Dorsolateral prefrontal cortex (tissue), 120 donors: ENCODE measurements at regions of chr3 and their contacts with region 1.

Region 1: DNA sequence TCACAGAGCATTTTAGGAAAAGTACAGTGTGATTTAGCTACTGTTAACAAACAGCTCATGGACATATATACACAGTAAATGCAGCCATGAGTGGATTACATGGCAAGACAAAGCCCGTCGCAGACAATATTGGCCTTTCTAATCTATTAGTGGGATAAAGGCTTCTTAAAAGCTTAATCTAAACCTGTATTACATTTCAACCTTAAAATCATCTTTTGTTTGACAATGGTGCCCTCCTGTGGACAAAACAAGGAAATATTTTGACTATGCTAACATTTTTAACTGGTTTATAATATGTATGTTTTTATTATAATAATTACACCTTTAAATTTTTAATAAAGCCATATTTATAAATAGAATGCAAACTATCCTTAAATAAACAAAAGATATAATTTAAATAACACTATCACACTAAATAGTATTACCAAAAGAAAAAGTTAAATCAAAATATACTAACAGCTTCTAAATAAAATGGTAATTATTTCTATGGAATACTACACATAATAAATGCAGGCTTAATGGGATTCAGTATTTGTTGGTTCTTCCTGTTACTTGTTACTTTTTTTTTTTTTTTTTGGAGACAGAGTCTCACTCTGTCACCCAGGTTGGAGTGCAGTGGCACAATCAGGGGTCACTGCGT is 38.6 kb downstream of the TAFA4 start:
- DNase-seq: no peak
- H3K4me3 ChIP-seq: no peak overlapping the region
- H3K27ac ChIP-seq: no peak overlapping the region
- H3K27me3 ChIP-seq: no peaks in the 10 kb centered on the region
- CTCF ChIP-seq: peak; percentile 36 to 82 (median 66)

Region 2: GRCh38 chr3:68953816-68954444 is 60.2 kb after region 1 on chr3:
- intact Hi-C with region 1: loop called in 1 of 2 experiments (anchors 2 kb)
- DNase-seq: no peak
- H3K4me3 ChIP-seq: no peak overlapping the region
- H3K27ac ChIP-seq: no peak overlapping the region
- H3K27me3 ChIP-seq: no peaks in the 10 kb centered on the region
- CTCF ChIP-seq: no peak

Region 3: GRCh38 chr3:68972358-68972979 is 78.7 kb after region 1 on chr3:
- intact Hi-C with region 1: loop called in 1 of 2 experiments (anchors 5 kb)
- DNase-seq: peak; percentile 45 to 82 (median 70)
- H3K4me3 ChIP-seq: no peak overlapping the region
- H3K27ac ChIP-seq: no peak overlapping the region
- H3K27me3 ChIP-seq: no peaks in the 10 kb centered on the region
- CTCF ChIP-seq: peak; percentile 50 to 97 (median 85)

Region 4: GRCh38 chr3:69120879-69121464 is 227.3 kb after region 1 on chr3:
- intact Hi-C with region 1: no loop called
- DNase-seq: peak in 7 of 10 donors; percentile 47 to 87 (median 69)
- H3K4me3 ChIP-seq: peak overlapping the region in 6 of 59 donors; percentile 2 to 13 (median 4)
- H3K27ac ChIP-seq: peak overlapping the region in 18 of 59 donors; percentile 4 to 57 (median 24)
- H3K27me3 ChIP-seq: no peaks in the 10 kb centered on the region
- CTCF ChIP-seq: peak; percentile 85 to 99 (median 96)